ENCODE measurements at regions of chr7 and their contacts with region 1.

Region 1: DNA sequence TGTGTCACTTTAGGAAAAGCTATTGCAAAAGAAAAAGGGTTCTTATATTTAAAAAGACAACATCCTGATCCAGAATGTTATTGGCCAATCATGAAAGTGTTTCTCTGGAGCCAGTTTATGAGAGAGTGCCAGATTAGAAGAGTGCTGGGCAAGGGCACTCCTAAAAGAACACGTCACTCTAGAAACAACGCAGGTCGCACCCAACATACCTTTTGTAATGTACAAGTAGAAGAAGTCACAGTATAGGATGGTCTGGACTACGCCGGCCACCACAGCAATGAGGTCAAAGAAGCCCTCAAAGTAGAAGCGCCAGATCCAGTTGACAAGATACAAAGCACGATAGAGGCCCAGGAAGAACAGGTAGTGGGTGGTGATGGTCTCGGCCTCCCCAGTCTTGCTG is 18.1 kb upstream of the DAGLB start:
- DNase-seq: no peak
- ATAC-seq: no peak
- H3K4me3 ChIP-seq: no peak overlapping the region
- H3K27ac ChIP-seq: no peak overlapping the region
- H3K4me1 ChIP-seq: no peaks in the 10 kb centered on the region
- H3K27me3 ChIP-seq: no peaks in the 10 kb centered on the region

Region 2: DNA sequence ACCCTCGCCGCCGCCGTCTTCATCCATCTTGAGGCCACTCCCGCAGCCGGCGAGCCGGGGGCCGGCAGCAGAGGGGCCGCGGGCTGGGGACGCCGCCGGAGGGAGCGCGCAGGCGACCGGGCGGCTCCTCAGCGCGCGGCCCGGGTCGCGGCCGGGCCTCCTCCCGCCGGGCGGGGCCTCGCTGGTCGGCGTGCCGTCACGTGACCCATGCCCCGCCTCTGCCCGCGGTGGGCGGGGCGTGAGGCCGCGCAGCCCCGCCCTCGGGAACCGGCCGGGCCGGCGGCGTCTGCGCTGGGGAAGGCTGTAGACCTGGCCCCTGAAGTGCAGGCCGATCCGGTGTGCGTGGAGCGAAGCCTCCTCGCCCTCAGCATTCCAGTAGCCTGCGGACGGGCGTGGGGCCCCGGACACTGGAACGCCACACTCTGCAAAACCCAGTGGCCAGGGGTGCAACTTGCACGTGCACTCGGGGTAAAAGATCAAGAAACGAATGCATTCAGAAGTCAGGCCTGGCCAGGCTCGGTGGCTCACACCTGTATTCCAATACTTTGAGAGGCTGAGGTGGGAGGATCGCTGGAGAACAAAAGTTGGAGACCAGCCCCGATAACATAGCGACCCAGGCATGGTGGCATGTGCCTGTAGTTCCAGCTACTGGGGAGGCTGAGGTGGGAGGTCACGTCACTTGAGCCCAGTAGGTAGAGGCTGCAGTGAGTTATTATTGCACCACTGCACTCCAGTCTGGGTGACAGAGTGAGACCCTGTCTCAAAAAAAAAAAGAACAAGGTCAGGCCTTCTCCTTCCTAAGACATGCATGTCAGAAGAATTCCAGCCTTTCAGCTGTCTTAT is 193.2 kb before region 1 on chr7 and contains the start of gene CYTH3:
- intact Hi-C with region 1: no loop called
- DNase-seq: peak; percentile 81 to 93 (median 91)
- ATAC-seq: peak; percentile 93 to 95
- H3K4me3 ChIP-seq: peak within 1 kb of the TSS; percentile 96
- H3K27ac ChIP-seq: peak within 1 kb of the TSS; percentile 8
- H3K4me1 ChIP-seq: peaks cover 9% of the 10 kb centered on the region
- H3K27me3 ChIP-seq: no peaks in the 10 kb centered on the region
- total RNA-seq, gene CYTH3: 27.2 to 40.2 (median 32.0) TPM

Region 3: GRCh38 chr7:6480323-6480660 is 14.4 kb after region 1 on chr7:
- intact Hi-C with region 1: loop called in 1 of 4 experiments (anchors 2 kb)
- DNase-seq: no peak
- ATAC-seq: no peak
- H3K4me3 ChIP-seq: no peak overlapping the region
- H3K27ac ChIP-seq: no peak overlapping the region
- H3K4me1 ChIP-seq: peaks cover 6% of the 10 kb centered on the region
- H3K27me3 ChIP-seq: no peaks in the 10 kb centered on the region

Measured in right cardiac atrium (tissue), 5 donors.